CD8-positive, alpha-beta T cell (primary cell): ENCODE measurements at regions of chr1 and their contacts with region 1.

Region 1: DNA sequence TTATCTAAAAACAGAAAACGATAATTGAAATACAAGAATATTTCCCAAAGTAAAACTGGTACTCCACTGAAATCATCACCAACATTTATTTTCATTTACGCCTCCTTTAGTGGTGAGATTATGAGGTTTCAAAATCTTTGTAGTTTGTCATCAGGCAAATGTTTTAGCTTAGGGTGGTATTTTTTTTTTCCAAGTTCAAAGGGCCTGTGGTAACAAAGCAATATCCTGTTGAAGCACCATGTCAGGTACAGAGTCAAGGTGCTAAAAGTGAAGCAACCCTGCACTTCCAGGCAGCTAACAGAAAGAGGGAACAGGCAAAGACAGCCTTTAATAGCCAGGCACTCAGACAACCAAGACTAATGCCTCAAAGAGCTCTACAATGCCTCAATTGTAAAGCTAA is 89.2 kb downstream of the JAK1 start:
- DNase-seq: peak in 6 of 9 experiments; percentile 33 to 92 (median 54)
- ATAC-seq: peak; percentile 93
- H3K4me3 ChIP-seq: no peak overlapping the region
- H3K4me3 Mint-ChIP-seq: peak overlapping the region; percentile 69
- H3K27ac ChIP-seq: peak overlapping the region in 1 of 2 experiments; percentile 51
- H3K27ac Mint-ChIP-seq: peak overlapping the region; percentile 82
- H3K4me1 ChIP-seq: peaks cover 48% of the 10 kb centered on the region
- H3K4me1 Mint-ChIP-seq: peaks cover 79% of the 10 kb centered on the region
- H3K27me3 ChIP-seq: no peaks in the 10 kb centered on the region
- H3K27me3 Mint-ChIP-seq: no peaks in the 10 kb centered on the region
- CTCF ChIP-seq: no peak

Region 2: GRCh38 chr1:64834734-64835133 is 42.4 kb before region 1 on chr1:
- CTCF ChIA-PET with region 1: no interaction called
- POLR2A ChIA-PET with region 1: interaction called, 3 read pairs
- intact Hi-C with region 1: loop called in 1 of 2 experiments (anchors 5 kb)
- DNase-seq: no peak
- ATAC-seq: no peak
- H3K4me3 ChIP-seq: no peak overlapping the region
- H3K4me3 Mint-ChIP-seq: no peak overlapping the region
- H3K27ac ChIP-seq: no peak overlapping the region
- H3K27ac Mint-ChIP-seq: no peak overlapping the region
- H3K4me1 ChIP-seq: peaks cover 4% of the 10 kb centered on the region
- H3K4me1 Mint-ChIP-seq: peaks cover 6% of the 10 kb centered on the region
- H3K27me3 ChIP-seq: no peaks in the 10 kb centered on the region
- H3K27me3 Mint-ChIP-seq: no peaks in the 10 kb centered on the region
- CTCF ChIP-seq: no peak

Region 3: DNA sequence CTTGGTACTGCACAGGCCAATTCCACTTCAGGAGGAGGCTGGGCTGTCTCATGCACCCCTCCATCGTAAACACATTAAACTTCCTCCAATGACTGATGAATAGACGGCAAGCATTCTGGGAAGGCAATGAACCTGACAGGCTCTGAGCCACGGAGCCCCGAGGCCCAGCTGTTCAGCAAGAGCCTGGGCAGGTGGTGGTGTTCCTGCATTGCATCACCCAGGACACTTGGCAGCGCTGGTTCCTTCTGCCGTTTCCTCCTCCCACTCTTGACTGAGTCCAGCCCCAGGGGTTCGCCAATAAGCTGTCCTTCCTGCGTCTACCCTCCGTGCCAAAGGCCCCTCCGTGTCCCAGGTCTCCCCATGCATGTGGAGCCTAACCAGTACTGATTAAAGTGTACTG is 20.6 kb before region 1 on chr1:
- CTCF ChIA-PET with region 1: no interaction called
- POLR2A ChIA-PET with region 1: no interaction called
- intact Hi-C with region 1: loop called in 1 of 2 experiments (anchors 2 kb)
- DNase-seq: no peak
- ATAC-seq: no peak
- H3K4me3 ChIP-seq: no peak overlapping the region
- H3K4me3 Mint-ChIP-seq: no peak overlapping the region
- H3K27ac ChIP-seq: no peak overlapping the region
- H3K27ac Mint-ChIP-seq: no peak overlapping the region
- H3K4me1 ChIP-seq: no peaks in the 10 kb centered on the region
- H3K4me1 Mint-ChIP-seq: peaks cover 18% of the 10 kb centered on the region
- H3K27me3 ChIP-seq: no peaks in the 10 kb centered on the region
- H3K27me3 Mint-ChIP-seq: no peaks in the 10 kb centered on the region
- CTCF ChIP-seq: no peak

Region 4: GRCh38 chr1:64864018-64864940 is 12.9 kb before region 1 on chr1:
- CTCF ChIA-PET with region 1: interaction called, 8 read pairs
- POLR2A ChIA-PET with region 1: interaction called, 8 read pairs
- intact Hi-C with region 1: loop called (anchors 1 to 2 kb)
- DNase-seq: peak; percentile 11 to 92 (median 57)
- ATAC-seq: peak; percentile 82
- H3K4me3 ChIP-seq: no peak overlapping the region
- H3K4me3 Mint-ChIP-seq: peak overlapping the region; percentile 37
- H3K27ac ChIP-seq: peak overlapping the region in 1 of 2 experiments; percentile 83
- H3K27ac Mint-ChIP-seq: peak overlapping the region; percentile 79
- H3K4me1 ChIP-seq: peaks cover 19% of the 10 kb centered on the region
- H3K4me1 Mint-ChIP-seq: peaks cover 44% of the 10 kb centered on the region
- H3K27me3 ChIP-seq: no peaks in the 10 kb centered on the region
- H3K27me3 Mint-ChIP-seq: no peaks in the 10 kb centered on the region
- CTCF ChIP-seq: no peak

Region 5: DNA sequence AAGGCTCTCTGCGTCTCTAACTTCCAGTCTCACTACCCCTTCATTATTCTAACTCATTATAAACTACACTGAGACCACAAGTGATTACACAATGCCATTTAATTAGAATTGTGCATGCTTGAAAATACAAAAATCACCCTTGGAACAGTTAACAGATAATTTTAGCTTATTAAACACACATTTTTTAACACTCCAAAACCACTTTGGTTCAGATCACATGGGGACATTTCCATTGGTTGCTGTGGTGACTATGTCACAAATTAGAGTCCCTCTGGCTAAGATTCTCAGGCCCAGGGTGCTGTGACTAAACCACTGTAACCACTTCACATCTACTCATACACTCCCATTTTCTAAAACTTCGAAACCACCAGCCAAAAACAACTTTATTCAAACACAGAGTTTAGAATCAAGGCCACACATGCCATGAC is 46.2 kb after region 1 on chr1:
- CTCF ChIA-PET with region 1: interaction called, 5 read pairs
- POLR2A ChIA-PET with region 1: interaction called, 3 read pairs
- intact Hi-C with region 1: loop called (anchors 2 to 5 kb)
- DNase-seq: peak in 5 of 9 experiments; percentile 19 to 74 (median 41)
- ATAC-seq: peak; percentile 32
- H3K4me3 ChIP-seq: no peak overlapping the region
- H3K4me3 Mint-ChIP-seq: peak overlapping the region; percentile 19
- H3K27ac ChIP-seq: peak overlapping the region in 1 of 2 experiments; percentile 19
- H3K27ac Mint-ChIP-seq: peak overlapping the region; percentile 29
- H3K4me1 ChIP-seq: peaks cover 83% of the 10 kb centered on the region
- H3K4me1 Mint-ChIP-seq: peaks cover 96% of the 10 kb centered on the region
- H3K27me3 ChIP-seq: no peaks in the 10 kb centered on the region
- H3K27me3 Mint-ChIP-seq: no peaks in the 10 kb centered on the region
- CTCF ChIP-seq: no peak

Region 6: GRCh38 chr1:65002508-65003315 is 125.6 kb after region 1 on chr1:
- CTCF ChIA-PET with region 1: interaction called, 3 read pairs
- POLR2A ChIA-PET with region 1: interaction called, 3 read pairs
- intact Hi-C with region 1: loop called in 1 of 2 experiments (anchors 2 kb)
- DNase-seq: peak; percentile 42 to 91 (median 79)
- ATAC-seq: peak; percentile 87
- H3K4me3 ChIP-seq: peak overlapping the region; percentile 56 to 66
- H3K4me3 Mint-ChIP-seq: peak overlapping the region; percentile 84
- H3K27ac ChIP-seq: peak overlapping the region; percentile 10 to 61
- H3K27ac Mint-ChIP-seq: peak overlapping the region; percentile 91
- H3K4me1 ChIP-seq: peaks cover 19% of the 10 kb centered on the region
- H3K4me1 Mint-ChIP-seq: peaks cover 30% of the 10 kb centered on the region
- H3K27me3 ChIP-seq: peaks cover 0 to 2% of the 10 kb centered on the region in 2 experiments
- H3K27me3 Mint-ChIP-seq: no peaks in the 10 kb centered on the region
- CTCF ChIP-seq: no peak